ENCODE measurements at regions of chr12 and their contacts with region 1.

Region 1: GRCh38 chr12:12376646-12377448 is 20.0 kb downstream of the BORCS5 start:
- DNase-seq: peak; percentile 33
- H3K4me3 Mint-ChIP-seq: no peak overlapping the region
- H3K27ac Mint-ChIP-seq: peak overlapping the region; percentile 30
- H3K4me1 Mint-ChIP-seq: peaks cover 37% of the 10 kb centered on the region
- H3K27me3 Mint-ChIP-seq: no peaks in the 10 kb centered on the region

Region 2: GRCh38 chr12:12456637-12457036 is 79.8 kb after region 1 on chr12:
- CTCF ChIA-PET with region 1: interaction called, 10 read pairs
- intact Hi-C with region 1: no loop called
- DNase-seq: no peak
- H3K4me3 Mint-ChIP-seq: peak overlapping the region; percentile 17
- H3K27ac Mint-ChIP-seq: peak overlapping the region; percentile 76
- H3K4me1 Mint-ChIP-seq: peaks cover 51% of the 10 kb centered on the region
- H3K27me3 Mint-ChIP-seq: no peaks in the 10 kb centered on the region

Region 3: DNA sequence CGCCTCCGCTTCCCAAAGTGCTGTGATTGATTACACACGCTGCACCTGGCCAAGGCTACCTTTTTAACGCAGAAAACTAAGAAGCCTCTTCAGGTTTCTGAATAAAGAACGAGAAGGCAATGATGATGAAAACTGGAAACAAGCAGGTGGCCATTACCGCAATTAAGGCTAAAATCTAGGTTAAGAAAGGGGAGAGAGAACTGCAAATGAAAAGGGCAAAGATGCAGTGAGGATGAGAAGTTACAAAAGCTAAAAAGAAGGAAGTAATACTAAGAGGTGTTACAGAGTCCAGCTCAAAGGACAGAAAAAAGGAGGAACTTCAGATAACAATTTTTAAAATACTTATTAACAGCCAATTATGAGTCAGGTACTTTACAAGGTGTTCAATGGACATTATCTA is 106.1 kb after region 1 on chr12:
- CTCF ChIA-PET with region 1: interaction called, 5 read pairs
- intact Hi-C with region 1: loop called (anchors 2 kb)
- DNase-seq: no peak
- H3K4me3 Mint-ChIP-seq: peak overlapping the region; percentile 66
- H3K27ac Mint-ChIP-seq: peak overlapping the region; percentile 92
- H3K4me1 Mint-ChIP-seq: peaks cover 65% of the 10 kb centered on the region
- H3K27me3 Mint-ChIP-seq: no peaks in the 10 kb centered on the region

Region 4: GRCh38 chr12:12654691-12655460 is 278.0 kb after region 1 on chr12:
- CTCF ChIA-PET with region 1: interaction called, 46 read pairs
- intact Hi-C with region 1: loop called (anchors 1 kb)
- DNase-seq: no peak
- H3K4me3 Mint-ChIP-seq: no peak overlapping the region
- H3K27ac Mint-ChIP-seq: no peak overlapping the region
- H3K4me1 Mint-ChIP-seq: peaks cover 7% of the 10 kb centered on the region
- H3K27me3 Mint-ChIP-seq: no peaks in the 10 kb centered on the region

Region 5: DNA sequence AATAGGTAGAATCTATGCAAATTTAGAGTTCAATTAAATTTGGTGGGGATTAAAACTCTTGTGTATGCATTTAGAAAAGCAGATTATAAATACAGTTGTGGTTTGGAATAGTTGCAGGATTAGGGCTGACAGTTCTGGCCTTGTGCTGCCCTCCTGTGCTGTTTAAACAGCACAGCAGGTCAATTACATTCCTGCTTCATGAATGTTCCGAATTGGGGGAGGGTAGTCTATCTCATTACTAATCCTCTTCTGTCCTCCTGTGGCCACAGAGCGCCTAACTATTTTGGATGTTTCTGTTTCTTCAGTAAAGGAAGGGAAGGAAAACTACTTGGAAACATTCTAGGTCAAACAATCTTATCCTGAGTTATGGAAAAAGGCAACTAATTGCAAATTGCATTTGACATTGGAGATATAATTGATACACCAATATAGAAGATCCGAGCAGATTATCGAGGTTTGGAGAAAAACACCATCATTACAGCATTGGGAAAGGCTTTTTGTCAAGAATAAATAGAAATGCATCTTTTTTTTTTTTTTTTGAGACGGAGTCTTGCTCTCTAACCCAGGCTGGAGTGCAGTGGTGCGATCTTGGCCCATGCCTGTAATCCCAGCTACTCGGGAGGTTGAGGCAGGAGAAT is 327.9 kb after region 1 on chr12:
- CTCF ChIA-PET with region 1: interaction called, 8 read pairs
- intact Hi-C with region 1: loop called (anchors 1 kb)
- DNase-seq: peak; percentile 60
- H3K4me3 Mint-ChIP-seq: no peak overlapping the region
- H3K27ac Mint-ChIP-seq: no peak overlapping the region
- H3K4me1 Mint-ChIP-seq: peaks cover 23% of the 10 kb centered on the region
- H3K27me3 Mint-ChIP-seq: no peaks in the 10 kb centered on the region

Measured in activated naive CD4-positive, alpha-beta T cell treated with anti-CD3 and anti-CD28 coated beads for 36 hours (primary cell).